HEK293T (cell line): ENCODE measurements at regions of chr1 and their contacts with region 1.

Region 1: DNA sequence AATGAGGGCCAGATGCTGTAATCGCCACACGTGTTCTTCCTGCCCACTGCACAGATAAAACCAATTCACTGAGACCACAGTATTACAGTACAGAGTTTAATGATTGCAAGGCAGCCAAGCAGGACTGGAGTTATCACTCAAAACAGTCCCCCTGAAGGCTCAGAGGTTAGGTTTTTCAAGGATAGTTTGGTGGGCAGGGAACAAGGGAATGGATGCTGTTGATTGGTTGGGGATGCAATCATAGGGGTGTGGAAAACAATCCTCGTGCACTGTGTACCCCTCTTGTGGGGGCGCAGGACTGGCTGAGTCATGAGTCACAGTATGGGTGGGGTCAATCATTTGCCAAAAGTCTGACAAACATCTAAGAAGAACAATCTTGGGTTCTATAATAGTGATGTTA is 12.4 kb upstream of the USP1 start:
- DNase-seq: no peak

Region 2: GRCh38 chr1:62436466-62437256 is 12.2 kb after region 1 on chr1 and contains the start of gene USP1:
- CTCF ChIA-PET with region 1: no interaction called
- POLR2A ChIA-PET with region 1: interaction called, 23 read pairs
- DNase-seq: peak; percentile 95